ENCODE measurements at regions of chr14 and their contacts with region 1.

Region 1: DNA sequence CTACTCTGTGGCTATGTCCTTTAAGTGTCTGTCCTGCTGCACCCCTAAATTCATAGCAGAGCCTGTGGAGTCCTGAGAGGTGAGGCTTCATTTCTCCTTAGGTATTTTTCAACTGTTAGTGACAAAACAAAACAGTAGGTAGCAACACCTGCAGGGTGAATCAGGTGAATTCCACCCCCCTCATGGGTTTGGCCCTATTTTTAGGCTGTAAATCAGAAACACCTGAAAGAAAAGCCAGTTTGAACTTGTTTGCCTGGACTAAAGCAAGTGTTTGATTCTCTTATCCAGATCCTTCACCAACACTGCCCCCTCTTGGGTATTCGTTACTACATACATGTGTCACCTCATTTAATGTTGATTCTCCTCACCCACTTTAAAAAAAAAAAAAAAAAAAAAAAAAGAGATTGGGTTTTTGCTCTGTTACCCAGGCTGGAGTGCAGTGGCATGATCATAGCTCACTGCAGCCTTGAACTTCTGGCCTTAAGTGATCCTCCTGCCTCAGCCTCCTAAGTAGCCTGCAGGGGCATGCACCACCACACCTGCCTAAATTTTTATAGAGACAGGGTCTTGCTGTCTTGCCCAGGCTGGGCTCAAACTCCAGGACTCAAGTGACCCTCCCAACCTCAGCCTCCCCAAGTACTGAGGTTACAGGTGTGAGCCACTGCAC is 10.3 kb downstream of the TBPL2 start:
- DNase-seq: peak; percentile 62
- H3K4me3 Mint-ChIP-seq: no peak overlapping the region
- H3K27ac Mint-ChIP-seq: no peak overlapping the region
- H3K4me1 Mint-ChIP-seq: peaks cover 13% of the 10 kb centered on the region
- H3K27me3 Mint-ChIP-seq: no peaks in the 10 kb centered on the region
- CTCF ChIP-seq: peak; percentile 25

Region 2: DNA sequence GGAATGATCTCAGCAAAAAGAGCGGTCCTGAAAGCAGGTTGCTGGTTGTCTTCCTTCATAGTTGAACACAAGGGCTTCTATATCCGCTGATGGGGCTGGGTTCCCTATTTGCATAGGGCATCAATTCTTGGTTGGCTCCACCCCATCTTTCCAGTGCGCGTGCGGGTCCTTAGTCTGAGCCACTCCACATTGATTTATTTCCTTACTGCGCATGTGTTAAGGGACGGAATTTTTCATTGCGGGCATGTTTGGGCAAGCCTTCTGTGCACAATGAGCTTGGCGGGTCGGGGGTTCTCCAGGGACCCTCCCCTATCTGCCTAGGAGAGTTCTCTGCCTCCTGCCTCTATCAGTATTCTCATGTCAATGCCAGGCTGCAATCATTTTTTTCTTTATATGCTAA is 217.5 kb before region 1 on chr14:
- CTCF ChIA-PET with region 1: no interaction called
- intact Hi-C with region 1: loop called (anchors 1 kb)
- DNase-seq: peak; percentile 35
- H3K4me3 Mint-ChIP-seq: no peak overlapping the region
- H3K27ac Mint-ChIP-seq: no peak overlapping the region
- H3K4me1 Mint-ChIP-seq: no peaks in the 10 kb centered on the region
- H3K27me3 Mint-ChIP-seq: no peaks in the 10 kb centered on the region
- CTCF ChIP-seq: no peak

Region 3: GRCh38 chr14:55245657-55246268 is 184.4 kb before region 1 on chr14:
- CTCF ChIA-PET with region 1: no interaction called
- intact Hi-C with region 1: loop called (anchors 10 kb)
- DNase-seq: peak; percentile 33
- H3K4me3 Mint-ChIP-seq: no peak overlapping the region
- H3K27ac Mint-ChIP-seq: no peak overlapping the region
- H3K4me1 Mint-ChIP-seq: no peaks in the 10 kb centered on the region
- H3K27me3 Mint-ChIP-seq: peaks cover 50% of the 10 kb centered on the region
- CTCF ChIP-seq: peak; percentile 50

Region 4: DNA sequence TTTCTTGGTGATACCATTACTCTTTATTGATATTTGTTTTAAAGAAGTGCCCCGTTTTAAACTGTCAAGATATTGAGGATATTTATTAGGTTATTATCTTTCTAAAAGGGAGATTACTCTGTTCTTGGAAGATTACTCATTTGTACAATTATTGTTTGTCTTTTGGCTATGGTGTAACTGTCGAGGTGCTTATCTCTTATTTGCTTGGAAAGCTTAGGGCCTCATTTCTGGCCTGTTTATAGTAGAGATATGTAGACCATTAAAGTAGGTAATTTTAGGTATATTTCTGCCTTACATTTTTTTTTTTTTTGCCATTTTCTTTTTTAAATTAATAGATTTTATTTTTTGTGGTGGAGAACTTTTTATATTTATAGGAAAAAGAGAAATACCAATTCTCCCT is 224.1 kb after region 1 on chr14:
- CTCF ChIA-PET with region 1: no interaction called
- intact Hi-C with region 1: loop called (anchors 10 kb)
- DNase-seq: no peak
- H3K4me3 Mint-ChIP-seq: no peak overlapping the region
- H3K27ac Mint-ChIP-seq: no peak overlapping the region
- H3K4me1 Mint-ChIP-seq: no peaks in the 10 kb centered on the region
- H3K27me3 Mint-ChIP-seq: no peaks in the 10 kb centered on the region
- CTCF ChIP-seq: no peak

Measured in Calu3 (cell line).